ENCODE measurements at regions of chr19 and their contacts with region 1.

Region 1: DNA sequence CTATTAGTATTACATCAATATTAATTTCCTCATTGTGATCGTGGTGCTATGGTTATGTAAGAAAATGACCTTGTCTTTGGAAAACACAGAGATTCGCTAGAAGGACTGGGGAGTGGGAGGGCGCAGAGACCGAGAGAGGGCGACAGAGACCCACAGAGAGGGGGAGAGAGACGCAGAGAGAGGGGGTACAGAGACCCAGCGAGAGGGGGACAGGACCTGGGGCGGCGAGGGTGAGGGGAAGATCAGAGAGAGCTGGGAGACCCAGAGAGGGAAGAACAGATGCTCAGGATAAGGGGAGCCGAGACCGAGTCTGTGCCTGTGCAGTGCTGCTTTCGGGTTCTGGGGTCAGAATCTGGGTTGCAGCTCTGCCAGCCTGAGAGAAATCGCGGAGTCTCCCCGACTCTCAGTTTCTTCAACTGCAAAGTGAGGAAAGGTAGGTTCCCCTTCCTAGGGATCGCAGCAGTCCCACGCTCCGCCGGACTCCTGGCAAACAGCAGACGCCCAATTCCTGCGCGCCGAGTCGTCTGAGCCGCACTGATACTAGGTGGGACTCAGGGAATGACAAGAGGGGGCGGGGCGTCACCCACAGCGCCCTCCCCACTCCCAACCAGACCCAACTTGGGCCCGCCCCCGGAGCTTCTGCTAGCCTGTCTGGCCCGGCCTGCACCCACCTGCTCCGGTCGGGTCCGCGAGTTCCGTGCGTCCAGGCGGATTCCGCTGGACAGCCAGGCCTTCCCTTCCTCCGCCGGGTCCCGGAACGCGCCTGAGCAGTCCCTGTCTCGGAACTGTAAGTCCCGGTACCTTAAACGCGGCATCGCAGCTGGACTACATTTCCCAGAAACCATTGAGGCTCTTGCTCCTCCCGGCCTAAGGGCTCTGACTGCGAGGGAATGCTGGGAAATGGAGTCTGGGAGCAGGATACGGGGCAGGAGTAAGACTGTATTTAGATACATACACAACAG is 15.3 kb downstream of the IZUMO2 start:
- DNase-seq: peak; percentile 86
- ATAC-seq: peak; percentile 95
- H3K4me3 Mint-ChIP-seq: peak overlapping the region; percentile 72
- H3K27ac Mint-ChIP-seq: no peak overlapping the region
- H3K4me1 Mint-ChIP-seq: no peaks in the 10 kb centered on the region
- H3K27me3 Mint-ChIP-seq: peaks cover 28% of the 10 kb centered on the region
- CTCF ChIP-seq: no peak

Region 2: GRCh38 chr19:50252111-50252886 is 104.6 kb after region 1 on chr19:
- CTCF ChIA-PET with region 1: interaction called, 17 read pairs
- POLR2A ChIA-PET with region 1: no interaction called
- DNase-seq: peak; percentile 82
- ATAC-seq: peak; percentile 88
- H3K4me3 Mint-ChIP-seq: no peak overlapping the region
- H3K27ac Mint-ChIP-seq: no peak overlapping the region
- H3K4me1 Mint-ChIP-seq: no peaks in the 10 kb centered on the region
- H3K27me3 Mint-ChIP-seq: peaks cover 9% of the 10 kb centered on the region
- CTCF ChIP-seq: peak; percentile 82

Region 3: GRCh38 chr19:50266896-50267295 is 119.2 kb after region 1 on chr19:
- CTCF ChIA-PET with region 1: interaction called, 13 read pairs
- POLR2A ChIA-PET with region 1: no interaction called
- DNase-seq: peak; percentile 96
- ATAC-seq: peak; percentile 99
- H3K4me3 Mint-ChIP-seq: peak overlapping the region; percentile 32
- H3K27ac Mint-ChIP-seq: no peak overlapping the region
- H3K4me1 Mint-ChIP-seq: peaks cover 8% of the 10 kb centered on the region
- H3K27me3 Mint-ChIP-seq: no peaks in the 10 kb centered on the region
- CTCF ChIP-seq: no peak

Region 4: DNA sequence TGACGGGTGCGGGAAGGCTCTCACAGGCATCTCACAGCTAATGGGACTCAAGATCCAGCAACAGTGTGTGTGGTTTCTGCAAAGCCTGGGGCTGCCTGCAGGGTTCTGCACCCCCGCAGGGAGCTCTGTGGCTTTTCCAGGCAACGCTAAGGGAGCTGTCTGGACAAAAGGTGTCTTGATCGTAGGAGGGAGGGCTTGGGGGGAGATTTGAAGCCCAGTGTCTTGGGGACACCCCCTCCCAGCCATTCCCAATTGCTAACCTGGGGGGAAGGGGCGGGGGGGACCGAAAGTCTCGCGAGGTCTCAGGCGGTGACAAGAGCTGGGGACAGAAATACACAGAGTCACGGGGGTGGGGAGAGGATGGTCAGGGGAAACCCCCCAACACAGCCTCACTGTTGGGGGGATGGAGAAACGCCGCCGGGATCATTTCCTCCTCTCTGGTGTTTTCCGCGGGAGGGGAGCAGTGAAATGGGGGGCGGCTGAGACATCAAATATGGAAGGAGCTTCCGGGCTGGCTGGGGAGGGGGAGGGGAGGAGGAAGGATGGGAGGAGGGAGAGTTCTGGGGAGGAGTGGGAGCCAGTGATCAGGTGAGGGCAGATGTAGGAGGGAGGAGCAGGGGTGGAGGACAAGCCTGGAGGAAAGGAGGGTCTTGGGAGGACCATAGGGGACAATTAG is 168.2 kb after region 1 on chr19:
- CTCF ChIA-PET with region 1: interaction called, 15 read pairs
- POLR2A ChIA-PET with region 1: interaction called, 7 read pairs
- DNase-seq: peak; percentile 75
- ATAC-seq: peak; percentile 24
- H3K4me3 Mint-ChIP-seq: peak overlapping the region; percentile 82
- H3K27ac Mint-ChIP-seq: peak overlapping the region; percentile 98
- H3K4me1 Mint-ChIP-seq: peaks cover 30% of the 10 kb centered on the region
- H3K27me3 Mint-ChIP-seq: peaks cover 6% of the 10 kb centered on the region
- CTCF ChIP-seq: no peak

Region 5: DNA sequence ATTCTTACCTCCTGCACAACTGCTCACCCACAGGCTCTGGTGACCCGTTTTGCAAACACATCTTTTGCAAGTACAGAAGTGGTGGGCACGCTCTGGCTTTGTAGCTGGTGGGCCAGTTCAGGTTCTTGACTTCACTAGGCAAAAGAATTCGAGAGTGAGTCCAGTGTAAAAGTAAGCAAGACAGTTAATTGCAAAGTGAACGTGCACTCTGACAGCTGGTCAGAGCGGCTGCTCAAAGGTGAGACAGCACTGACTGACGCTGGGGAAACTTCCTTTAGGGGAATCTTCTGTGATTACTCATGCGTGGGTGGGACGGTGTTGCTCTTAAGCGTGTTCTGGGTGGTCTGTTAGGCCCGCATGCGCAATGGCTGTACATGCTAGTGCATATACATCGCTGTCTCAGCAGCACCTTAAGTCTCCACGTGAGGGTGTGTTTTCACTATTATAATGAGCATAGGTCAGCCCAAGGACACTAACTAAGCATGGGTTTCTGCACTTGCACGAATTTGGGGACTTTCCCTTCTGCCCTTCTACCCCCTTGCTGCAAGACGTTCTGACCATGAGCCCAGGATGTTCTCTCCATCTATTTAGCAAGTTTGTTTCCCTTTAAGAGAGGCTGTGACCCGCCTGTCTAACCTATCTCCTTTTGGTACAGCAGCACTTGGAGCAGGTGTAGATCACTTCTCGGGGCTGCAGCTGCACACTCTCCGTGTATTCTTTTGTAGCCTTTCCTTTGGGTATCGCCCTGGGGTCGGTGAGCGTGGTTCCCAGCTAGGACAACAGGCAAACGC is 1047.0 kb after region 1 on chr19:
- CTCF ChIA-PET with region 1: no interaction called
- POLR2A ChIA-PET with region 1: no interaction called
- DNase-seq: no peak
- ATAC-seq: no peak
- H3K4me3 Mint-ChIP-seq: no peak overlapping the region
- H3K27ac Mint-ChIP-seq: no peak overlapping the region
- H3K4me1 Mint-ChIP-seq: no peaks in the 10 kb centered on the region
- H3K27me3 Mint-ChIP-seq: peaks cover 9% of the 10 kb centered on the region
- CTCF ChIP-seq: no peak